ENCODE measurements at regions of chr15 and their contacts with region 1.

Region 1: GRCh38 chr15:101127506-101128076 is 124.3 kb downstream of the CHSY1 start:
- DNase-seq: peak in 8 of 14 experiments; percentile 12 to 68 (median 32)
- ATAC-seq: peak; percentile 57
- H3K4me3 ChIP-seq: no peak overlapping the region
- H3K4me3 Mint-ChIP-seq: peak overlapping the region; percentile 55
- H3K27ac ChIP-seq: peak overlapping the region; percentile 39 to 58
- H3K27ac Mint-ChIP-seq: peak overlapping the region; percentile 92
- H3K4me1 ChIP-seq: peaks cover 25% of the 10 kb centered on the region
- H3K4me1 Mint-ChIP-seq: peaks cover 45% of the 10 kb centered on the region
- H3K27me3 ChIP-seq: no peaks in the 10 kb centered on the region
- H3K27me3 Mint-ChIP-seq: no peaks in the 10 kb centered on the region
- CTCF ChIP-seq: no peak

Region 2: DNA sequence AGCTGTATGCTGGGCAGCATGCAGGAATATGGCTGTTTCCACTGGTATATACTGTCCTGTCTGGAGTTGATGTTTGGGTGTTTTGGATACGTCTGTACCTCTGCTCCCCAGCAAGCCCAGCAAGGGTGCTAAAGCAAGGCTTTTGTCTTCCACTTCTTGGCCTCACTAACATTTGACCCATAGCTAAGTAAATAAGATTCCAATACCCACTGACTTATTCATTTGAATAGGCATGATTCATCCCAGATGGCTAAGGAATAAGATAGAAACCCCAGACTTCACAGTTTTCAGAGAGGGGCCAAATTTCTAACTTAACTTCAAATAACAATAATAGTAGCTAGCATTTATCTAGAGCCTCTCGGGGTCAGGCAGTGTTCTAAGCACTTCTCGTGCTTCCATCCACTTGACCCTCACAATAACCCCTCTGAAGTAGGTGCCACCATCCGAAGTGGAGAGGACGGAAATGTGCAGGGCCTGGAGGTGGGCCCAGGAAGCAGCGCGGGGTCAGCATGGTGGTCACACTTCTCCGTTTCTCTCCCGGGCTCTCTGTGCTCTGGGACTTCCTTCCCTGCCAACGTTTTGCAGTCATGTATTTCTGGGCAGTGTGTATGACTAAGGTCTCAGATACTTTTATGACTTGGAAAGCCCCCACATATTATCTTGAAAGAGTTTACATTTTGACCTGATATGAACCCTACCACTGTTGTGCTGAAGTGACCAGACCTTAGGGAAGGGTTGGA is 169.1 kb before region 1 on chr15:
- CTCF ChIA-PET with region 1: no interaction called
- POLR2A ChIA-PET with region 1: no interaction called
- intact Hi-C with region 1: no loop called
- DNase-seq: peak in 2 of 14 experiments; percentile 27 to 32
- ATAC-seq: no peak
- H3K4me3 ChIP-seq: no peak overlapping the region
- H3K4me3 Mint-ChIP-seq: no peak overlapping the region
- H3K27ac ChIP-seq: no peak overlapping the region
- H3K27ac Mint-ChIP-seq: no peak overlapping the region
- H3K4me1 ChIP-seq: no peaks in the 10 kb centered on the region
- H3K4me1 Mint-ChIP-seq: no peaks in the 10 kb centered on the region
- H3K27me3 ChIP-seq: peaks cover 2 to 7% of the 10 kb centered on the region in 2 experiments
- H3K27me3 Mint-ChIP-seq: peaks cover 36% of the 10 kb centered on the region
- CTCF ChIP-seq: no peak

Region 3: DNA sequence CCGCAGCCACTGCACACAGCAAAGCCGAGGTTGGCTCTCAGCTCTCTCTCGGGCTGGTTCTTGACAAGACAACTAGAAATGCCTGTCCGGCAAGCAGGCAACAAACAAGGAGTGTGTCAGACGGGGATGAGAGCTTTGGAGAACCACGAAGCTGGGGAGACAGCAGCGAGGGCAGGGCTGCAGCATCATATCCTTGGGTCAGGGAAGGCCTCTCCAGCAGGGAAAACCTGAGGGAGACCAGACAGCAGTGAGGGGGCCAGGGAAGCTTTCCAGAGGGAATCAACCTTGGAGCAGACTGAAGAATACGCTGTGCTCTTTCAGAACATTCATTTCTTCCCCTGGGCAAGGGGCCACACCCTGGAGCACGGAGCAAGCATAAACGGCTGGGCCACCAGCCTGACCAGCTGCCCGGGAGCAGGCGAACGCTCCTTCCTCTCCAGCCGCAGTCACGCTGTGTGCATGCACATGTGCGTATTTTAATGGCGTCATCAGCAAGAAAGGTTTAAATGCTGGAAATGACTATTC is 65.6 kb after region 1 on chr15:
- CTCF ChIA-PET with region 1: no interaction called
- POLR2A ChIA-PET with region 1: no interaction called
- intact Hi-C with region 1: loop called in 1 of 2 experiments (anchors 10 kb)
- DNase-seq: no peak
- ATAC-seq: no peak
- H3K4me3 ChIP-seq: no peak overlapping the region
- H3K4me3 Mint-ChIP-seq: no peak overlapping the region
- H3K27ac ChIP-seq: no peak overlapping the region
- H3K27ac Mint-ChIP-seq: no peak overlapping the region
- H3K4me1 ChIP-seq: peaks cover 32% of the 10 kb centered on the region
- H3K4me1 Mint-ChIP-seq: peaks cover 71% of the 10 kb centered on the region
- H3K27me3 ChIP-seq: no peaks in the 10 kb centered on the region
- H3K27me3 Mint-ChIP-seq: no peaks in the 10 kb centered on the region
- CTCF ChIP-seq: no peak

Region 4: DNA sequence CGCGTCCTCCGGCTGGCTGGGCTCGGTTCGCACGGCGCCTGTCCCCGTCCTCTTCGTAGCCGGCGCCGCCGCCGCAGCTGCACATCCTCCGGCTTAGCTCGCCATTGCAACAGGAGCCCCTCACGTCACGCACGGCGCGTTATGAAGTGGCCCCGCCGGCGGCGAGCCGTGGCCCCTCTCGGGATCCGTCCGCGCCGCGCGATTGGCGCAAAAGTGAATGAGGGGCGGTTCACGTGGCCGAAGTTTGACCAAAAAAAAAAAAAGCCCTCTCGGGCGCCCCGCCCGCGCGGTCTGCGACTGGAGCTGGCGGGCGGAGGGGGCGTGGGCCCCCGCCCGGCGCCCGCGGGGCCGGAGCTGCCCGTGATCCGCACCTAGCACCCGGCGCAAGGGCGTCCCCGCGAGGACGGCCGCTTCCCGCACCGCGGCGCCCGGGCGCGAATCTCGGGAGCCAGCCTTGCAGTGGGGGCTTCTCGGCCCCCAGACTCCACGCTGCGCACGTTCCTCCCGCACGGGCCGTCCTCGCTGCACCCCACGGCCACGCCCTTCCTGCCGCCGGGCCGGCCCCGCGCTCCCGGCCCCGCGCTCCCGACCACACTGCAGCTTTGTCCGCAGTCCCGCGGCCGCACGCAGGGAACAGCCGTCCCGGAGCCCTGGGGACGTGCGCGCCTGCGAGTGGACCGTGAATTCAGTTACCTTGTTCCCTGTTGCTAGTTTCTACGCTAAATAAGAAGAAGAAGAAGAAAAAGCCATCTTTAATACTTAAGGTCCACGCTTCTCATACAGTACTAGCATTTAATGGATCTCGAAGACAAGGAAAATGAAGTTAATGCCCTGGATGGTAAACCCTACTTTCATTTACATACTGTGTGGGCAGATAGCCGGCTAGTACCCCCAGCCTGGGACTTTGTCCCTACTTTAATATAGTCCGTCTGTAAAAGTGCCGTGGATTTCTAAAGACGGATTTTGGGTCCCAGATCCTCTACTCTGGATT is 124.5 kb after region 1 on chr15 and contains the start of gene CHSY1:
- CTCF ChIA-PET with region 1: no interaction called
- POLR2A ChIA-PET with region 1: interaction called, 12 read pairs
- intact Hi-C with region 1: loop called in 1 of 2 experiments (anchors 5 kb)
- DNase-seq: peak; percentile 61 to 93 (median 76)
- ATAC-seq: peak; percentile 75
- H3K4me3 ChIP-seq: peak within 1 kb of the TSS; percentile 66
- H3K4me3 Mint-ChIP-seq: peak within 1 kb of the TSS; percentile 100
- H3K27ac ChIP-seq: no peak within 1 kb of the TSS
- H3K27ac Mint-ChIP-seq: peak within 1 kb of the TSS; percentile 89
- H3K4me1 ChIP-seq: peaks cover 25% of the 10 kb centered on the region
- H3K4me1 Mint-ChIP-seq: peaks cover 38% of the 10 kb centered on the region
- H3K27me3 ChIP-seq: no peaks in the 10 kb centered on the region
- H3K27me3 Mint-ChIP-seq: no peaks in the 10 kb centered on the region
- CTCF ChIP-seq: no peak
- total RNA-seq, gene CHSY1: 5.8 to 6.7 TPM